K562 (cell line): ENCODE measurements at regions of chr7 and their contacts with region 1.

Region 1: GRCh38 chr7:44477063-44477830 is 13.2 kb downstream of the NUDCD3 start:
- DNase-seq: peak; percentile 70 to 77 (median 74)
- ATAC-seq: peak; percentile 96
- H3K4me3 ChIP-seq: no peak overlapping the region
- H3K27ac ChIP-seq: no peak overlapping the region
- H3K4me1 ChIP-seq: no peaks in the 10 kb centered on the region; a peak in 1 of 5 replicates
- H3K27me3 ChIP-seq: no peaks in the 10 kb centered on the region
- CTCF ChIP-seq: peak; percentile 85 to 97 (median 93)
- EP300 ChIP-seq: no peak
- POLR2A ChIP-seq: no peak
- RAD21 ChIP-seq: peak; percentile 80 to 87

Region 2: DNA sequence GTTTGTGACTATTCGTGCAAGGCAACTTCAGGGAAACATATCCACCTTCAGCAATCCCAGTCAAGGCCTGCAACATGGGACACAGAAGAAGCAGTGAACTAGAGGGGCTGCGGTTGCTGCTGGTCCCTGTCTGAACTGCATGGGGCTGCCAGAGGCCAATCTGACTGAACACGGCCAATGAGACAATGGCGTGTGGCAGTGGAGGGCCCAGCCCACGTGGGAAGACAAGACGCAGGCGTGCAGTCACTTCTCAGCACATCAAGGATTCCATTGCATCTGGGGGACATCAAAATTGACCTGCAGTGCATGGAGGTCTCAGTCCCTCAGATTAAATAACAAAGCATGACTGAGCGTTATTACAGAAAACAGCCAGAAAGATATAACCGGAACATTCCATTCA is 1148.9 kb before region 1 on chr7:
- CTCF ChIA-PET with region 1: no interaction called
- POLR2A ChIA-PET with region 1: no interaction called
- in situ Hi-C with region 1: no loop called
- intact Hi-C with region 1: no loop called
- DNase-seq: no peak
- ATAC-seq: no peak
- H3K4me3 ChIP-seq: no peak overlapping the region
- H3K27ac ChIP-seq: no peak overlapping the region
- H3K4me1 ChIP-seq: no peaks in the 10 kb centered on the region
- H3K27me3 ChIP-seq: peaks cover 8 to 41% of the 10 kb centered on the region in 2 experiments
- CTCF ChIP-seq: no peak
- EP300 ChIP-seq: no peak
- POLR2A ChIP-seq: no peak
- RAD21 ChIP-seq: no peak

Region 3: DNA sequence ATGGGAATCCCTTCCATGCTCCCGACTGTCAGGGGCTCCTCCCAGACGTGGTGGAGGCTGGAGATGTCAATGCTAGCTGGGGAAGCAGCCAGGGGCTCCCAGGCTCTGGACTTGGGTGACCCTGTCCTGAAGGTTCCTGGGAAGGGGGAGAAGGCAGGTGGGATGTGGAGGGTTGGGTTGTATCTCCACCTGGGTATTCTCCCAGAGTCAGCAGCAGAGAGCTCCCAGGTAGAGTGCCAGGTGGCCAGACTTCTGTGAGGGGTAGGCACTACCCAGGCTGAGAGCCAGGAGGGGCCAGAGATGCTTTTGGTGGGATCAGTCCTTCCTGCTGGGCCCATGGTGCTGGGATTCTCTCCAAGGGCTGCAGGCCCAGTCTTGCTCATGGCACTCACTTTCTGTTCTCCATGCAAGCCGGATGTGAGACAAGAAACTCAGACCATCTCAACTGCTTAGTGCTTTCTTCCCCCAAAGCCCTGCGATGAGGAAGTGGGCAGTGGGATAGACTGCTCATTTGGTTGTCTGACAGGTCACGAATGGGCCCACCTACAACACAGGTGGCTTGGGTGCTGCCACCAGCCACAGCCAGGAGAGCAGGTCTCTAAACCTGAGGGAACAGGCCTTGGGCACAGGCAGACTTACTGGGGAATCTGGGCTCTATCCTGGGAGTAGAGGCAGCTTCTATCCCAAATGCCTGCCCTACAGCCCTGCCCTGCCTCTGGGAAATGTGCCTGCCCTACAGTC is 99.4 kb before region 1 on chr7:
- CTCF ChIA-PET with region 1: no interaction called
- POLR2A ChIA-PET with region 1: no interaction called
- in situ Hi-C with region 1: no loop called
- intact Hi-C with region 1: loop called (anchors 10 kb)
- DNase-seq: no peak
- ATAC-seq: no peak
- H3K4me3 ChIP-seq: no peak overlapping the region
- H3K27ac ChIP-seq: no peak overlapping the region
- H3K4me1 ChIP-seq: peaks cover 3 to 4% of the 10 kb centered on the region in 2 experiments; a peak in 4 of 5 replicates
- H3K27me3 ChIP-seq: peaks cover 0 to 11% of the 10 kb centered on the region in 2 experiments; a peak in 2 of 5 replicates
- CTCF ChIP-seq: no peak
- EP300 ChIP-seq: no peak
- POLR2A ChIP-seq: no peak
- RAD21 ChIP-seq: no peak